HepG2 (cell line): ENCODE measurements at regions of chr16 and their contacts with region 1.

Region 1: DNA sequence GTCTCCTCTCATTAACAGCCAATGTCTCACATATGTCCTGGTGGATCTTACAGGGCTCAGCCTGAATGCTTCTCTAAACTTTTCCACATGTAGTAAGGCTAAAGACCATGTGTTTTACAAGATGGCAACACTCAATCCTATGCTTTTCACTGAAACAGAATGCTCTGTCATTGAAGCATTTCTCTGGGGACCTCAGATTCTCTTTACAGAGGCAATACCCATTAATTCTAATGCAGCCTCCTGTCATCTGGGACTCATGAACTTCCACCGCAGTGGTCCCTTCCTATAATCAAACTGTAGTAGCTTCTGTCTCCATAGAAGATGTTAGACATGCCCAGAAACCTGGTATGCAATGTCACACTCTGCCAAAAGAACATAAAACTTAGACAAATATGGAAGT is 926.6 kb upstream of the RBFOX1 start:
- DNase-seq: no peak
- ATAC-seq: no peak
- H3K4me3 ChIP-seq: no peak overlapping the region
- H3K27ac ChIP-seq: no peak overlapping the region
- H3K4me1 ChIP-seq: no peaks in the 10 kb centered on the region
- H3K27me3 ChIP-seq: no peaks in the 10 kb centered on the region
- CTCF ChIP-seq: no peak
- EP300 ChIP-seq: no peak
- POLR2A ChIP-seq: no peak
- RAD21 ChIP-seq: no peak

Region 2: DNA sequence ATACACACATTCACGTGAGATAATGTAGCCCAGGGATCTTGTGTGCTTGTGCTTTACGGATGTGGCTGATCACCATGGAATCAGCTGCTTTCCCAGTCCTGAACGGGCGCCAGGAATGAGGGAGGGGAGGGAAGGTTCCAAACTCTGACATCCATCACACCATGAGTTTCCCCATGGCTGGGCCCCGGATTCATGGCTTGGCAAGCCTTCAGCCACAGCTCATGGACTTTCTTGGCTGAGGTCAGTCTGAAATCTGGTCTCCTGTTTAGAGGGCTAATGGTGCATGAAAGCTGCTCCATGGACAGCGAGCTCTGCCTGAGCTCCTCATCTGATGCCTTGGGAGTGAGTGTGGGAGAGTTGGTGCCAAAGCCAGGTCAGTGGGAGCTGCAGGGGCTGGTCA is 540.8 kb before region 1 on chr16:
- CTCF ChIA-PET with region 1: no interaction called
- POLR2A ChIA-PET with region 1: no interaction called
- in situ Hi-C with region 1: no loop called
- intact Hi-C with region 1: no loop called
- DNase-seq: no peak
- ATAC-seq: no peak
- H3K4me3 ChIP-seq: no peak overlapping the region
- H3K27ac ChIP-seq: no peak overlapping the region
- H3K4me1 ChIP-seq: no peaks in the 10 kb centered on the region
- H3K27me3 ChIP-seq: peaks cover 0 to 12% of the 10 kb centered on the region in 2 experiments; a peak in 1 of 5 replicates
- CTCF ChIP-seq: no peak
- EP300 ChIP-seq: no peak
- POLR2A ChIP-seq: no peak
- RAD21 ChIP-seq: no peak

Region 3: DNA sequence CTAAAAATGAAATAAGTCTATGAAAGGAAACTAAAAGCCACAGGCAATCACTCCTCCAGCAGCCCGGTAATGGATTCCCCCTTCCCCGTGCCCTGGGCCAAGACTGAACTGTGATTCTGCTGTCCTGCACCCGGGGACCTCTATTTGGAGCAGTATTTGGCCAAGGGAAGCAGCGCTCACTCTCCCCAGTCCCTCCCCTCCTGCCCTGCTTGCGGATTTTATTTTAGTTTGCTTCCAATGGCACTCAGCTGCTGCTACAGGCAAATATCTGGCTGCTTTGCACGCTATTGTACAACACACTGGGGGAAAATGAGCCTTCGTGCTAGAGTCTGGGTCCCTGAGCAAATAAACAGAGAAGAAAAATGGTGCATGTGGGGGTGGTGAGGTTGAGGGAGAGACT is 49.1 kb before region 1 on chr16:
- CTCF ChIA-PET with region 1: no interaction called
- POLR2A ChIA-PET with region 1: no interaction called
- in situ Hi-C with region 1: loop called (anchors 10 kb)
- intact Hi-C with region 1: no loop called
- DNase-seq: no peak
- ATAC-seq: no peak
- H3K4me3 ChIP-seq: no peak overlapping the region
- H3K27ac ChIP-seq: no peak overlapping the region
- H3K4me1 ChIP-seq: no peaks in the 10 kb centered on the region
- H3K27me3 ChIP-seq: no peaks in the 10 kb centered on the region
- CTCF ChIP-seq: no peak
- EP300 ChIP-seq: no peak
- POLR2A ChIP-seq: no peak
- RAD21 ChIP-seq: no peak

Region 4: GRCh38 chr16:6536411-6536810 is 130.4 kb after region 1 on chr16:
- CTCF ChIA-PET with region 1: no interaction called
- POLR2A ChIA-PET with region 1: no interaction called
- in situ Hi-C with region 1: no loop called
- intact Hi-C with region 1: no loop called
- DNase-seq: no peak
- ATAC-seq: no peak
- H3K4me3 ChIP-seq: no peak overlapping the region
- H3K27ac ChIP-seq: no peak overlapping the region
- H3K4me1 ChIP-seq: no peaks in the 10 kb centered on the region
- H3K27me3 ChIP-seq: no peaks in the 10 kb centered on the region
- CTCF ChIP-seq: no peak
- EP300 ChIP-seq: no peak
- POLR2A ChIP-seq: no peak
- RAD21 ChIP-seq: no peak